GM12878 (cell line): ENCODE measurements at regions of chr21 and their contacts with region 1.

Region 1: DNA sequence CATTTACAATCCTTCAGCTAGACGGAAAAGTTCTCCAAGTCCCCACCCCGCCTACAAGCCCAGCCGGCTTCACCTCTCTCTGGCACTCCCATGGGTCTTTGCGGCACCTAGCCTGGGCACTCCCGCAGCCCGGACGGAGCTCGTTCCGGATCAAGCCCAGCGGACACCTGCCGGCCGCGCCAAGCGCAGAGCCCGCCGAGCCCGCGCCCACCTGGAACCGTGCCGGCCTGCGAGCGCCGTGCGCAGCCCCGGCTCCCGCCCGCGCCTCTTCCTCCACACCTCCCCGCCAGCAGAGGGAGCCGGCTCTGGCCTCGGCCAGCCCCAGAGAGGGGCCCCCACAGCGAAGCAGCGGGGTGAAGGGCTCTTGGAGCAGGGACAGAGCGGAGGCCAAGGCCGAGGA is 50.0 kb upstream of the KRTAP19-8 start:
- DNase-seq: no peak
- ATAC-seq: no peak
- H3K4me3 ChIP-seq: no peak overlapping the region
- H3K27ac ChIP-seq: no peak overlapping the region
- H3K4me1 ChIP-seq: no peaks in the 10 kb centered on the region
- H3K27me3 ChIP-seq: no peaks in the 10 kb centered on the region
- CTCF ChIP-seq: 0 out of 6 replicates have a peak, but pooled peaks of 1 of the 3 experiments have one; percentile 13
- EP300 ChIP-seq: no peak
- POLR2A ChIP-seq: no peak
- RAD21 ChIP-seq: no peak

Region 2: DNA sequence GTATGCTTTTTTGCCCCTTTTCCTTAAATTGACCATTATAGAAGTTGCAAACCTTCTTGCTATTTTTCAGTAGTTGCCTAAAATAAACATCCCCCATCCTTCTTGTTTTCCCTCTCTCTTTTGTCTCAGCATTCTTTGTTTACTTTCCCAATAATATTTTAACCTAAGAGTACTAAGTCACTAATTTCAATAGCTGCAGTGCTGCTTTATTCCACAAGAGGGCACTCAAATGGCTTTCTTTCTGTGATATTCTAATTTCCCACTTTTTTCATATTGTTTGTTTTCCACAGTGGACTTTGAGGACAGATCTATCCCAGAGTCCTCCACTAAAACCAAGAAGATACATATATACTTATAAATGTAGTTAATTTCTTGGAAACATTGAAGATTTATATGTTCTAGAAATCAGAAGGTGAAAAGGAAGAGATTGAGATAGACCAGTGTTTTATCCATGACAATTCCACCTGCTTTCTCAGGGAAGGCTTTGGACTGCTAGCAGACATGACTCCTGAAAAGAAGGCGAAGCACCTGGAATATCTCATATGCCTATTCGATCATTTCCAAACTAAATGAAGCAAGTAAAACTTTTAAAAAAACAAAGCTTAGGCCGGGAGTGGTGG is 1043.8 kb before region 1 on chr21:
- CTCF ChIA-PET with region 1: interaction called, 6 read pairs
- POLR2A ChIA-PET with region 1: no interaction called
- RAD21 ChIA-PET with region 1: no interaction called
- SMC1A ChIA-PET with region 1: no interaction called
- in situ Hi-C with region 1: loop called (anchors 10 kb)
- intact Hi-C with region 1: loop called (anchors 1 kb)
- DNase-seq: no peak
- ATAC-seq: no peak
- H3K4me3 ChIP-seq: no peak overlapping the region
- H3K27ac ChIP-seq: no peak overlapping the region
- H3K4me1 ChIP-seq: no peaks in the 10 kb centered on the region
- H3K27me3 ChIP-seq: no peaks in the 10 kb centered on the region
- CTCF ChIP-seq: peak; percentile 63 to 69 (median 64)
- EP300 ChIP-seq: no peak
- POLR2A ChIP-seq: no peak
- RAD21 ChIP-seq: peak; percentile 48

Region 3: DNA sequence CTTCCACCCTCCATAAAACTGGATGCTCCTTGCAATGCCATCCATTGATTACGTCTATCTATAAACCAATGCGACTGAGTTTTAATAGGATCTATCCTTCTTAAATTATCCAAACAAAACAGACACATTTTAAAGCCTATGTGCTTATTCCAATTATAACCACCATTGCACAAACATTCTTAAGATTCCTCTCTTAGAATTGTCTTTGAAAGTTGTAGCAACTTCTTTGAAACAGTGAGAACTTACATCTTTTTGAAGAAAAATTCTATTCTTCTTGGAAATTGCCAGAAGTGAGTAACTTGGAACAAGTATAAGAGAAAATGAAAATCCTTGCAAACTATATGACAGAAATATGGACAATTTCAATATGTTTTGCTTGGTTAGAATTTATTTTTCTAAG is 768.1 kb before region 1 on chr21 and contains the start of gene KRTAP26-1:
- CTCF ChIA-PET with region 1: no interaction called
- POLR2A ChIA-PET with region 1: no interaction called
- RAD21 ChIA-PET with region 1: no interaction called
- SMC1A ChIA-PET with region 1: no interaction called
- in situ Hi-C with region 1: no loop called
- intact Hi-C with region 1: no loop called
- DNase-seq: no peak
- ATAC-seq: no peak
- H3K4me3 ChIP-seq: no peak within 1 kb of the TSS
- H3K27ac ChIP-seq: no peak within 1 kb of the TSS
- H3K4me1 ChIP-seq: no peaks in the 10 kb centered on the region
- H3K27me3 ChIP-seq: no peaks in the 10 kb centered on the region
- CTCF ChIP-seq: no peak
- EP300 ChIP-seq: no peak
- POLR2A ChIP-seq: no peak
- RAD21 ChIP-seq: no peak
- polyA plus RNA-seq, gene KRTAP26-1: not detected

Region 4: GRCh38 chr21:30434033-30434631 is 654.2 kb before region 1 on chr21:
- CTCF ChIA-PET with region 1: no interaction called
- POLR2A ChIA-PET with region 1: no interaction called
- RAD21 ChIA-PET with region 1: no interaction called
- SMC1A ChIA-PET with region 1: no interaction called
- in situ Hi-C with region 1: no loop called
- intact Hi-C with region 1: loop called (anchors 10 kb)
- DNase-seq: no peak
- ATAC-seq: peak; percentile 72
- H3K4me3 ChIP-seq: no peak overlapping the region
- H3K27ac ChIP-seq: no peak overlapping the region
- H3K4me1 ChIP-seq: no peaks in the 10 kb centered on the region
- H3K27me3 ChIP-seq: no peaks in the 10 kb centered on the region
- CTCF ChIP-seq: peak; percentile 36 to 41 (median 41); a peak in 5 of 6 replicates
- EP300 ChIP-seq: no peak
- POLR2A ChIP-seq: no peak
- RAD21 ChIP-seq: no peak

Region 5: GRCh38 chr21:30831194-30831765 is 257.0 kb before region 1 on chr21:
- CTCF ChIA-PET with region 1: interaction called, 6 read pairs
- POLR2A ChIA-PET with region 1: no interaction called
- RAD21 ChIA-PET with region 1: interaction called, 3 read pairs
- SMC1A ChIA-PET with region 1: no interaction called
- in situ Hi-C with region 1: loop called (anchors 5 kb)
- intact Hi-C with region 1: loop called (anchors 1 kb)
- DNase-seq: no peak
- ATAC-seq: no peak
- H3K4me3 ChIP-seq: no peak overlapping the region
- H3K27ac ChIP-seq: no peak overlapping the region
- H3K4me1 ChIP-seq: no peaks in the 10 kb centered on the region
- H3K27me3 ChIP-seq: no peaks in the 10 kb centered on the region
- CTCF ChIP-seq: peak; percentile 36 to 61 (median 51); a peak in 5 of 6 replicates
- EP300 ChIP-seq: no peak
- POLR2A ChIP-seq: no peak
- RAD21 ChIP-seq: peak; percentile 47; the same call in 1 of the 2 replicates

Region 6: DNA sequence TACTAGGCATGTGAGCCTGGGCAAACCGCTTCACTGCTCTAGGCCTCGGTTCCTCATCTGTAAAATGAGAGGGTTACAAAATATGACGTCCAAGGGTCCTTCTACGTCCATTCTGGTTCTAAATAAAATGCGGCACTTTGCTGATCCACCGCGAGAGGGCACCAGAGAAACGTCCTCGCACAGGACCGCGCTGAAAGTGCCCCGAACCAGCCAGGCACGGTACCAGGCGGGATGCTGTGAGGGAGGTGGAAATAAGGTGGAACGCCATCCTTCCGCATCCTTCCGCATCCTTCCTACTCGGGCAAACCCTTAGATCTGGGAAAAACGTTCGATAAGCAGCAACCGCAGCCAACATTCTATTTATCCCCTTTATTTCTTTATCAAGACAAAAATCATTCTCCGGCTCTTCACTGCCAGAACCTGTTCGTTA is 10.3 kb after region 1 on chr21:
- CTCF ChIA-PET with region 1: interaction called, 11 read pairs
- POLR2A ChIA-PET with region 1: no interaction called
- RAD21 ChIA-PET with region 1: no interaction called
- SMC1A ChIA-PET with region 1: interaction called, 3 read pairs
- in situ Hi-C with region 1: no loop called
- intact Hi-C with region 1: no loop called
- DNase-seq: no peak
- ATAC-seq: peak; percentile 91
- H3K4me3 ChIP-seq: no peak overlapping the region
- H3K27ac ChIP-seq: no peak overlapping the region
- H3K4me1 ChIP-seq: 0 out of 2 replicates have a peak, but pooled peaks cover 2% of the 10 kb centered on the region
- H3K27me3 ChIP-seq: no peaks in the 10 kb centered on the region
- CTCF ChIP-seq: peak; percentile 80 to 88 (median 80)
- EP300 ChIP-seq: no peak
- POLR2A ChIP-seq: no peak
- RAD21 ChIP-seq: peak; percentile 86